ENCODE measurements at regions of chrX and their contacts with region 1.

Region 1: GRCh38 chrX:72245461-72246089 is 6.7 kb upstream of the ERCC6L start:
- DNase-seq: peak; percentile 41
- H3K4me3 ChIP-seq: no peak overlapping the region
- H3K27ac ChIP-seq: no peak overlapping the region
- H3K4me1 ChIP-seq: no peaks in the 10 kb centered on the region
- H3K27me3 ChIP-seq: no peaks in the 10 kb centered on the region
- CTCF ChIP-seq: peak; percentile 93 to 94

Region 2: DNA sequence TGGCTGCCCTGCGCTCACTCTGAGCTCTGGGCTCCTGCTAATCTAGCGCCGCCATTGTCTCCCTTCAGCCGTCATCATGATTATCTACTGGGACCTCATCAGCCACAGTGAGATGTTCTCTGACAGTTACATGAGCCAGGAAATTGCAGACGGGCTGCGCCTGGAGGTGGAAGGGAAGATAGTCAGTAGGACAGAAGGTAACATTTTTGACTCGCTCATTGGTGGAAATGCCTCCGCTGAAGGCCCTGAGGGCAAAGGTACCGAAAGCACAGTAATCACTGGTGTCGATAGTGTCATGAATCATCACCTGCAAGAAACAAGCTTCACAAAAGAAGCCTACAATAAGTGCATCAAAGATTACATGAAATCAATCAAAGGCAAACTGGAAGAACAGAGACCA is 85.8 kb before region 1 on chrX:
- CTCF ChIA-PET with region 1: no interaction called
- dilution Hi-C with region 1: no loop called
- in situ Hi-C with region 1: no loop called
- intact Hi-C with region 1: no loop called
- DNase-seq: peak; percentile 9
- H3K4me3 ChIP-seq: no peak overlapping the region
- H3K27ac ChIP-seq: no peak overlapping the region
- H3K4me1 ChIP-seq: no peaks in the 10 kb centered on the region
- H3K27me3 ChIP-seq: no peaks in the 10 kb centered on the region
- CTCF ChIP-seq: no peak

Region 3: DNA sequence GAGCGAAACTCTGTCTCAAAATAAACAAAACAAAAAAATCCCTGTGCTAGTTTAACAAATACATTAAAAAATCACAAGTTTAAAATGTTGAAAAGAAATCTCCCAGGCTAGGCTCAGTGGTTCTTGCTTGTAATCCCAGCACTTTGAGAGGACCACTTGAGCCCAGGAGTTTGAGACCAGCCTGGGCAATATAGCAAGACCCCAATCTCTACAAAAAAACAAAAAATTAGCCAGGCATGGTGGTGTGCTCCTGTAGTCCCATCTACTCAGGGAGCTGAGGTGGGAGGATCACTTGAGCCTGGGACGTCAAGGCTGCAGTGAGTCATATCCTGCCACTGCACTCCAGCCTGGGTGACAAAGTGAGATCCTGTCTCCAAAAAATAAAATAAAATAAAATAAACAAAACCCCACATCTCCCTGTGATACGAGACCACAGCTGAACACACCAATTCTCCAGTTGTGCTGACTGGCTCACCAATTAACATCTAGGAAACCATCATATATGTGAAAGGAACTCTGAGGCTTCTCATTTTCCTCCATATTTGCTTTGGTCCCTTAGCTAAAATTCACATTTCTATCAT is 24.2 kb after region 1 on chrX:
- CTCF ChIA-PET with region 1: interaction called, 5 read pairs
- dilution Hi-C with region 1: no loop called
- in situ Hi-C with region 1: no loop called
- intact Hi-C with region 1: loop called (anchors 2 kb)
- DNase-seq: peak; percentile 35
- H3K4me3 ChIP-seq: no peak overlapping the region
- H3K27ac ChIP-seq: no peak overlapping the region
- H3K4me1 ChIP-seq: peaks cover 53% of the 10 kb centered on the region
- H3K27me3 ChIP-seq: no peaks in the 10 kb centered on the region
- CTCF ChIP-seq: no peak

Region 4: GRCh38 chrX:72461766-72462165 is 216.2 kb after region 1 on chrX:
- CTCF ChIA-PET with region 1: no interaction called
- dilution Hi-C with region 1: no loop called
- in situ Hi-C with region 1: no loop called
- intact Hi-C with region 1: loop called (anchors 5 kb)
- DNase-seq: peak; percentile 36
- H3K4me3 ChIP-seq: no peak overlapping the region
- H3K27ac ChIP-seq: no peak overlapping the region
- H3K4me1 ChIP-seq: no peaks in the 10 kb centered on the region
- H3K27me3 ChIP-seq: peaks cover 3% of the 10 kb centered on the region
- CTCF ChIP-seq: no peak

Region 5: DNA sequence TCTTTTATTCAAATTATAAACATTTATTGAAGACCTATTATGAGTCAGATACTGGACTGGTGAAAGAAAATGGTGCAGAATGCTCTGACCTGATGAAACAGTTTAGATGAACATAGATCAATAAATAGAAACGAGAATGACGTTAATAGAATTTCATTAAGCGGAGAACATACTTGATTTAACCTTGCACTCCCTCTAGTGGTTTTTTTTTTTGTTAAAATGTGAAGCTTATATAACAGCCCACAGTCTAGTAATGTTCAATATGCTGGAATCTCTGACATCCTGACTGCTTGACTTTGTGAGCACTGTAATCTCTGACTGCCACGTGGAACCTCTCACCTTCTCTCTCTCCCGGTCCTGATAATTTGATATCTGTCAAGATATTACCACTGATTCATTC is 294.7 kb after region 1 on chrX:
- CTCF ChIA-PET with region 1: interaction called, 9 read pairs
- dilution Hi-C with region 1: no loop called
- in situ Hi-C with region 1: loop called (anchors 10 to 25 kb)
- intact Hi-C with region 1: loop called (anchors 1 kb)
- DNase-seq: no peak
- H3K4me3 ChIP-seq: no peak overlapping the region
- H3K27ac ChIP-seq: no peak overlapping the region
- H3K4me1 ChIP-seq: no peaks in the 10 kb centered on the region
- H3K27me3 ChIP-seq: peaks cover 1% of the 10 kb centered on the region
- CTCF ChIP-seq: peak; percentile 21 to 35

Region 6: GRCh38 chrX:74138943-74139342 is 1893.4 kb after region 1 on chrX:
- CTCF ChIA-PET with region 1: no interaction called
- dilution Hi-C with region 1: no loop called
- in situ Hi-C with region 1: no loop called
- intact Hi-C with region 1: loop called (anchors 5 kb)
- DNase-seq: no peak
- H3K4me3 ChIP-seq: no peak overlapping the region
- H3K27ac ChIP-seq: no peak overlapping the region
- H3K4me1 ChIP-seq: no peaks in the 10 kb centered on the region
- H3K27me3 ChIP-seq: no peaks in the 10 kb centered on the region
- CTCF ChIP-seq: no peak